ENCODE measurements at regions of chr6 and their contacts with region 1.

Region 1: GRCh38 chr6:135002229-135002844 is 52.3 kb downstream of the HBS1L start:
- DNase-seq: no peak
- H3K4me3 ChIP-seq: no peak overlapping the region
- CTCF ChIP-seq: peak; percentile 38

Region 2: GRCh38 chr6:134990262-134990661 is 12.1 kb before region 1 on chr6:
- CTCF ChIA-PET with region 1: interaction called, 13 read pairs
- POLR2A ChIA-PET with region 1: no interaction called
- DNase-seq: no peak
- H3K4me3 ChIP-seq: no peak overlapping the region
- CTCF ChIP-seq: no peak